Naive thymus-derived CD8-positive, alpha-beta T cell (primary cell): ENCODE measurements at regions of chr5 and their contacts with region 1.

Region 1: GRCh38 chr5:172683696-172684471 is 42.8 kb downstream of the NEURL1B start:
- DNase-seq: peak; percentile 36 to 87 (median 64)
- ATAC-seq: peak; percentile 72 to 82
- H3K4me3 Mint-ChIP-seq: peak overlapping the region; percentile 75 to 86 (median 82)
- H3K27ac Mint-ChIP-seq: peak overlapping the region; percentile 52 to 92 (median 86)
- H3K4me1 Mint-ChIP-seq: peaks cover 8 to 22% (median 16%) of the 10 kb centered on the region in 4 donors
- H3K27me3 Mint-ChIP-seq: peaks cover 0 to 9% (median 2%) of the 10 kb centered on the region in 5 donors

Region 2: GRCh38 chr5:172666251-172666650 is 17.6 kb before region 1 on chr5:
- POLR2A ChIA-PET with region 1: no interaction called
- DNase-seq: no peak
- ATAC-seq: no peak
- H3K4me3 Mint-ChIP-seq: no peak overlapping the region
- H3K27ac Mint-ChIP-seq: no peak overlapping the region
- H3K4me1 Mint-ChIP-seq: no peaks in the 10 kb centered on the region
- H3K27me3 Mint-ChIP-seq: no peaks in the 10 kb centered on the region

Region 3: GRCh38 chr5:172697123-172698121 is 13.5 kb after region 1 on chr5:
- POLR2A ChIA-PET with region 1: interaction called, 17 read pairs
- DNase-seq: peak; percentile 66 to 91 (median 82)
- ATAC-seq: peak; percentile 95 to 98
- H3K4me3 Mint-ChIP-seq: peak overlapping the region; percentile 90 to 99 (median 94)
- H3K27ac Mint-ChIP-seq: peak overlapping the region; percentile 93 to 98 (median 96)
- H3K4me1 Mint-ChIP-seq: peaks cover 8 to 26% (median 14%) of the 10 kb centered on the region in 4 donors
- H3K27me3 Mint-ChIP-seq: peaks cover 3 to 19% (median 14%) of the 10 kb centered on the region in 5 donors